AG04450 (cell line): ENCODE measurements at regions of chr10 and their contacts with region 1.

Region 1: DNA sequence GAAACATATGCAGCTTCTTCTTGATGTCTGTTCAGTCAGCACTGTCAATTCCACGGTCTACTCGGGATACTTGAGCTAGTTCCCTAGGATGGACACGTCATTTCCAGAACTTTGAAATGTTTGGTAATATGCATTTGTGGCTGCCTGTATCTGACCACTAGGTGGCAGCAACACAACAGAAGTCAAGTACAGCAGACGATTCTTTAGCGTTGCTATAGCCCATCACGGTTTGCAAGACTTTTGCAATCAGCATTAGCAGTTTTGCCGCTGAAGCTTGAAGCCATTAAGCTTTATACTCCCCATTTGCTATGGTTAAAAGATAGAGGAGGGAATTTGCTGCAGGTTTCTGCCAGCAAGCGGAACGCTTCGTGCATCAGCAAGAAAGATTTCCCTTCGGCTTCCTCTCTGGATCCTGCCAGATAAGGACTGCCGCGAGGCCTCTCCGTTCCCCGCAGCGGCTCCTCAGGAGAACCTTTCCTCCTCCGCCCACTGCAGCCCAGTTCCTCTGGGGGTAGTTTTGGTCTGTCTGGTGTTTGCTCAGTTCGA is 63.5 kb downstream of the ABCC2 start:
- DNase-seq: peak; percentile 93
- H3K4me3 ChIP-seq: peak overlapping the region; percentile 34; the same call in 1 of the 2 replicates
- H3K27ac ChIP-seq: peak overlapping the region; percentile 22
- H3K27me3 ChIP-seq: no peaks in the 10 kb centered on the region
- CTCF ChIP-seq: peak; percentile 95

Region 2: DNA sequence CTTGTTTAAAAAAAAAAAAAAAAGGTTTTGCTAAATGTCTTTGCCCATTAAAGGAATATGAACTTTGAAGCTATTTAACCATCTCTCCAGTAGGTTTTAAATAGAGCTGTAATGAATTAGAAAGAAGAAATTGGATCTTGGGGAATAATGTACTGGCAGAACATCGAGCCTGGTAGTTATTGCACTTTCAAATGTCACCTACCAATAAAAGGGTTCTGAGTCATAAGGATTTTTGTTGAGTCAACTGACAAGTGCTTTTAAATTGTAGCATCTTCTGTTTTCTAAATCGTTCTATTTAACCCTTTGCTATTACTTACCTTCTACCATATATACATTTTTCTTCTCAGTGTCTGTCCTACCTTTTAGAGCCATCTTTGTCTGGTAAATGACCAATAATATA is 103.2 kb before region 1 on chr10:
- CTCF ChIA-PET with region 1: interaction called, 28 read pairs
- POLR2A ChIA-PET with region 1: interaction called, 4 read pairs
- DNase-seq: no peak
- H3K4me3 ChIP-seq: no peak overlapping the region
- H3K27ac ChIP-seq: no peak overlapping the region
- H3K27me3 ChIP-seq: no peaks in the 10 kb centered on the region
- CTCF ChIP-seq: no peak

Region 3: DNA sequence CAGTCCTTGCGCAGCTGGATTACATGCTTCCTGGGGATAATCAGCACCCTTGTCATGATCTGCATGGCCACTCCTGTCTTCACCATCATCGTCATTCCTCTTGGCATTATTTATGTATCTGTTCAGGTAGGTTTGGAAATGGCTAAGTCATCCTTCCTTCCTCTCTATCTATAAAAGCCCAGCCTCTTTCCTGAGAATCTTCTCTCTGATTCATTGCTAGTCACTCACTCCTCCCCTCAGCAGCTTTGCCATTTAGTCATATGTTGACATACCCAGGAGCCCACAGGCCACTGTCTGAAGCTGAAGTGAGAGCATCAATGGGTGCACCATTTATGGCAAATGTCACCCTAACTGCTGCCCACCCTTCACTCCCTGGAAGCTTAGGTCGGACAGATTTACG is 11.5 kb before region 1 on chr10:
- CTCF ChIA-PET with region 1: interaction called, 22 read pairs
- POLR2A ChIA-PET with region 1: no interaction called
- DNase-seq: no peak
- H3K4me3 ChIP-seq: no peak overlapping the region
- H3K27ac ChIP-seq: peak overlapping the region; percentile 61
- H3K27me3 ChIP-seq: no peaks in the 10 kb centered on the region
- CTCF ChIP-seq: no peak

Region 4: GRCh38 chr10:100009793-100010676 is 164.1 kb after region 1 on chr10 and contains the start of gene DNMBP:
- CTCF ChIA-PET with region 1: interaction called, 37 read pairs
- POLR2A ChIA-PET with region 1: no interaction called
- DNase-seq: no peak
- H3K4me3 ChIP-seq: peak within 1 kb of the TSS; percentile 94
- H3K27ac ChIP-seq: peak within 1 kb of the TSS; percentile 62
- H3K27me3 ChIP-seq: no peaks in the 10 kb centered on the region
- CTCF ChIP-seq: no peak; the same call in 1 of the 2 replicates
- polyA plus RNA-seq, gene DNMBP: 16.1 and 18.2 TPM in 2 replicates

Region 5: GRCh38 chr10:100053686-100054460 is 208.0 kb after region 1 on chr10:
- CTCF ChIA-PET with region 1: interaction called, 325 read pairs
- POLR2A ChIA-PET with region 1: no interaction called
- DNase-seq: no peak
- H3K4me3 ChIP-seq: no peak overlapping the region
- H3K27ac ChIP-seq: no peak overlapping the region
- H3K27me3 ChIP-seq: peaks cover 28% of the 10 kb centered on the region
- CTCF ChIP-seq: no peak

Region 6: GRCh38 chr10:100239851-100240250 is 393.9 kb after region 1 on chr10:
- CTCF ChIA-PET with region 1: interaction called, 14 read pairs
- POLR2A ChIA-PET with region 1: no interaction called
- DNase-seq: no peak
- H3K4me3 ChIP-seq: no peak overlapping the region
- H3K27ac ChIP-seq: no peak overlapping the region
- H3K27me3 ChIP-seq: no peaks in the 10 kb centered on the region
- CTCF ChIP-seq: no peak